ENCODE measurements at regions of chr10 and their contacts with region 1.

Region 1: DNA sequence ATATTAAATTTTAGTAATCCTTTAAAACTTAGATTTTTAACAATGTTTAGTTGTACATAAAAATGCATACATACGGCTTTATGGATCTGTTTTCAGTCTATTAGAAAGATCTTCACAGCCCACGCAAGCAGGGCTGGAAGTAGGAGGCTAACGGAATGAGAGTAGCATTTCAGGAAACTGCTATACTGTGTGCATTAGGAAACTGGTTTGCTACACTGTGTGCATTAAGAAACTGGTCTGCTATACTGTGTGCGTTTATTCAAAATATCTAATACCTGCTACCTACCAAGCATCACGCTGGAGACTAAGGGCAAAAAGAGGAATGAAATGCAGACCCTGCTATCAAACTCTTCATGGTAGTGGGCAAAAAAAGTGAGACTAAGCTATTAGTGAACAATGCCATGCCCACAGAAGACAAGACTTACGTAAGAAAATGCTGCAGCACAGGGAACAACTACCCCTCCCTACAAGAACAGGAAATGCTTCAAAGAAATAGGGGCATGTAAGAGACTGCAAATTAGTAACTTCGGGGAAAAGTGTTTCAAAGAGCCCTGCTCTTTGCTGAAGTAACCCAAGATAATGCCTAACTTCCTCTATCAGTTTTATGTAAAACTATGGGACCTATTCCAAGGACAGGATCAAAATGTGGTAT is 11.3 kb downstream of the RAB11FIP2 start:
- DNase-seq: no peak
- H3K4me3 ChIP-seq: no peak overlapping the region
- CTCF ChIP-seq: no peak

Region 2: DNA sequence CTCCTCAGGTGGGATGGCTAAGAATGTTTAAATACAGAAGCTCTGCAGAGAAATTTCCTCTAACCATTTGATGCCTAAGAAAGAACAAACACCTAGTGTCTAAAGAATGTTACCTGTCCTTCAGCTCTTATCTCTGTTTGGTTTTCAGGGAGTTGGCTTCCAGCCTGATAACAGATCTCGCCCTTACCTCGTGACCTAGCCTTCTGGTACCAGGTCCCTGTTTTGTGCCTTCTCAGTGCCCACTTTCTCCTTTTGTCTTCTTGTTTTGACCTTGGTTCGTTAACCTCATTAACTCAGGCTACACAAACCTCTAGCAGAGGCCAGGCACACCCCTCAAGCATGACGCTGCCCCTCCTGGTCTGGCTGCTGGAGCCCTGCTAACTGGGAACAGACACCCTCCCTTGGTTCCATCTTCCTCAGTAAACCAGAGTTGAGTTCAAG is 27.3 kb after region 1 on chr10:
- in situ Hi-C with region 1: loop called (anchors 5 kb)
- DNase-seq: no peak
- H3K4me3 ChIP-seq: no peak overlapping the region
- CTCF ChIP-seq: no peak

Region 3: DNA sequence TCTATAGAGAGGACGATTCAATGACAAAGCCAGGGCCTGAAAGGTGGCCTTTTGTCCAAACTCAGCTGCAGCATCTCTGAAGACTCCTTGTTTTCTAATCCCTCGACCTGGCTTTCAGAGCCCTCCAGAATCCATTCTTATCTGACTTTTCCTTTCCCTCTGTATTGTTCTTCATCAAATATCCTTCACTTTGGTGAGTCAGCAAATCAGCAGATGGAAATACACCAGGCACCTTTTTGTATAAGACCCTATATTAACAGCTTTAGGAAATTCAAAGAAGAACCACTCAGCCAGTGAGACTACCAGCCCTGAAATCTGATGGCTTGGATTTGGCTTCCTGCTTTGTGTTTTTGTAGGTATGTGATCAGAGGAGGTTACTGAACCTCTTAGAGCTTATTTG is 93.2 kb after region 1 on chr10:
- in situ Hi-C with region 1: no loop called
- DNase-seq: no peak
- H3K4me3 ChIP-seq: no peak overlapping the region
- CTCF ChIP-seq: no peak

Region 4: DNA sequence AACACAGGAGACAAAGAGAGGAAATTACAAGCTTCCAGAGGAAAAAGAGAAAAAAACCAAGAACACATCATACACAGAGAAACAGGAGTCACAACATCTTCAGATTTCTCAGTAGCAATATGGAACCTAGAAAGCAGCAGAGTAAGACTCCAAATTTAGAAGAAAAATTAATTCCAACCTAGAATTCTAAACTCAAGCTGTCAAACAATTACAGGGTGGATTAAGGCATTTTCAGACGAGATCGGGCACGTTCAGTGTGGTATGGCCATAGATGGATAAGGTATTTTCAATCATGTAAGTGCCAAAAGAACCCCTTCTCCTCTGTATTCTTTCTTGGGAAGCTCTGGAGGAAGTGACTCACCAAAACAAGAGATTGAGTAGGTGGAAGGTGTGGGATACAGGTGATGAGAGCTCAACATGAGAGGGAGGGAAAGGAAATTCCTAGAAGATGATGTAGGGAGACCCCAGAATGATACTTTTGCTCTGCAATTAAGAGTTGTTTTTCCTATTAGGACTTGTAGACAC is 255.1 kb after region 1 on chr10:
- in situ Hi-C with region 1: no loop called
- DNase-seq: no peak
- H3K4me3 ChIP-seq: no peak overlapping the region
- CTCF ChIP-seq: no peak

Region 5: DNA sequence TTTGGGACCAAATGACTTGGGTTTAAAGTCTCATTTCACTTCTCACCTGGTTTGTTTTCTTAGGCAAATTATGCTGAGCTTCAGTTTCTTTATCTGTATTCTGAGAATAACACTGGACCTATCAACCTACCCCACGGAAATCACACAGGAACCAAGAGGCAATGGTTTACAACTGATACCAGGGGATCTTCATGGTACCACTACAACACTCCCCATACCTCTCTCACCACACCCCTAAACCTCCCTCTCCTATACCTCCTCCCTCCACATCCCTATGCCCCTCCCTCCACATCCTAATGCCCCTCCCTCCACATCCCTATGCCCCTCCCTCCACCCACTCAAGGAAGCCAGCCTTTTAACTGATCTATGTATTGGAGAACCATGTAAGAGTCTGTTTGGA is 296.8 kb after region 1 on chr10:
- in situ Hi-C with region 1: loop called (anchors 10 kb)
- DNase-seq: no peak
- H3K4me3 ChIP-seq: no peak overlapping the region
- CTCF ChIP-seq: no peak

Region 6: DNA sequence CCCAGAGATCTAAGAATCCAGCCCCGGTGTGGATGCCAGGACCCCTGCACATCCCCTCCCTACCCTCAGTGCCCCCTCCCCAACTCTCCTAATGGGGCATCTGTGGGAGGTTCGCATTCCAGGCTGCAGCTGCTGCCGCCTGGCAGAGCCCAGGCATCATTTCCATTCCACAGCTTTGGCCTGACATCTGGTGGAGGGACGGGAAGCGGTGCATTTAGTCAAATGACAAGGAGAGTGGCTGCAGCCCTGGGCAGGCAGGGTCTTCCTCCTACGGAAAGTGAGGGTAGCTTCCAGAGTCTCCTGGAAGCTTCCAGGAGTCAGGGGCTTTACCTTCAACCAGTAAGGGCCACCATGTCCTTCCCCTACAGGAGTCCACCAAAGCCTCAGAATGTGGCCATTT is 529.2 kb after region 1 on chr10:
- in situ Hi-C with region 1: no loop called
- DNase-seq: no peak
- H3K4me3 ChIP-seq: no peak overlapping the region
- CTCF ChIP-seq: peak; percentile 30

Measured in astrocyte of the cerebellum (primary cell).